ENCODE measurements at regions of chr6 and their contacts with region 1.

Region 1: DNA sequence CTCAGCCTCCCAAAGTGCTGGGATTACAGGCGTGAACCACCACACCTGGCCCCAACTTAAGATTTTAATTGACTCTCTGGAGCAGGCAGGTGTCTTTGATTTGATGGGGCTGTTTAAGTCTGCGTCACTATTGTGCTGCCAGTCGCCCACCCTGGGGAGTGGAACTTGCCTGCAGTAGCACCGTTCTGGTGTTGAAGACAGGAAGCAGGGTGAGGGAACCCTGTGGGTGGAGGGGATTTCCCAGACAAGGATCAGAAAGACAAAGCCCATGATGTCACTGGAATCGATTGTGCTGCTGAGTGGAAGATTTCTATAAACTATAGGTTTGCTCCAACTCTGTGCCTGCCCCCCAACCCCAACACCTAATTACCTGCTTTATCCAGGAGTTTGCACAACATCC is 11.0 kb downstream of the ALDH8A1 start:
- DNase-seq: peak in 28 of 35 experiments; percentile 13 to 71 (median 40)
- ATAC-seq: peak in 2 of 4 experiments; percentile 41 to 99
- H3K4me3 ChIP-seq: no peak overlapping the region
- H3K4me3 Mint-ChIP-seq: no peak overlapping the region
- H3K27ac ChIP-seq: no peak overlapping the region
- H3K27ac Mint-ChIP-seq: no peak overlapping the region
- H3K4me1 ChIP-seq: peaks cover 6% of the 10 kb centered on the region in 2 experiments
- H3K4me1 Mint-ChIP-seq: peaks cover 5 to 10% (median 9%) of the 10 kb centered on the region in 3 donors
- H3K27me3 ChIP-seq: no peaks in the 10 kb centered on the region
- H3K27me3 Mint-ChIP-seq: no peaks in the 10 kb centered on the region

Region 2: GRCh38 chr6:134123666-134124208 is 815.2 kb before region 1 on chr6:
- CTCF ChIA-PET with region 1: interaction called, 30 to 50 read pairs
- POLR2A ChIA-PET with region 1: no interaction called
- DNase-seq: peak in 25 of 35 experiments; percentile 2 to 72 (median 32)
- ATAC-seq: peak; percentile 59 to 98 (median 88)
- H3K4me3 ChIP-seq: no peak overlapping the region
- H3K4me3 Mint-ChIP-seq: no peak overlapping the region
- H3K27ac ChIP-seq: no peak overlapping the region
- H3K27ac Mint-ChIP-seq: peak overlapping the region in 1 of 2 donors; percentile 66
- H3K4me1 ChIP-seq: no peaks in the 10 kb centered on the region
- H3K4me1 Mint-ChIP-seq: peaks cover 0 to 3% (median 3%) of the 10 kb centered on the region in 3 donors
- H3K27me3 ChIP-seq: peaks cover 0 to 4% of the 10 kb centered on the region in 2 experiments
- H3K27me3 Mint-ChIP-seq: peaks cover 0 to 3% of the 10 kb centered on the region in 2 donors

Region 3: DNA sequence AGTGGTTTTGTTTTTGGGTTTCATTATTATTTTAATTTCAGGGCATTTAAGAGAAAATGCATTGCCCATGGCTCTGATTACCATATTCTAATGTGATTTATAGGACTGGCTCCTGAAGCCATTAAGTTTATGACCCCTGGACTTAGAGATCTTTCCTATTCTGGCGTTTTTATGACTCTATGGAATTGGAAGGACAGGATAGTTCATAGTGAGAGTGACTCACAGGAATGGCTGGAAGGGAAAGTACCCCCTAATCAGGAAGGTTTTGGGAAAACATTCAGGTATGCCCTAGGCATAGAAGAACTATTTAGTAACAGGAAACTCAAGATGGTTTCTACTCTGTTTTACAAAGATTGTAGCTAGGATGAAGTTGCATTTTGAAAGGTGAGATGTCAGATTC is 777.9 kb before region 1 on chr6:
- CTCF ChIA-PET with region 1: interaction called, 39 to 43 read pairs
- POLR2A ChIA-PET with region 1: interaction called in 1 of 2 experiments, 3 read pairs
- DNase-seq: no peak
- ATAC-seq: no peak
- H3K4me3 ChIP-seq: no peak overlapping the region
- H3K4me3 Mint-ChIP-seq: no peak overlapping the region
- H3K27ac ChIP-seq: no peak overlapping the region
- H3K27ac Mint-ChIP-seq: no peak overlapping the region
- H3K4me1 ChIP-seq: no peaks in the 10 kb centered on the region
- H3K4me1 Mint-ChIP-seq: no peaks in the 10 kb centered on the region
- H3K27me3 ChIP-seq: no peaks in the 10 kb centered on the region
- H3K27me3 Mint-ChIP-seq: no peaks in the 10 kb centered on the region

Region 4: GRCh38 chr6:134640975-134641429 is 297.9 kb before region 1 on chr6:
- CTCF ChIA-PET with region 1: interaction called, 3 to 13 read pairs
- POLR2A ChIA-PET with region 1: no interaction called
- DNase-seq: peak; percentile 46 to 89 (median 69)
- ATAC-seq: peak; percentile 86 to 90 (median 89)
- H3K4me3 ChIP-seq: no peak overlapping the region
- H3K4me3 Mint-ChIP-seq: no peak overlapping the region
- H3K27ac ChIP-seq: no peak overlapping the region
- H3K27ac Mint-ChIP-seq: no peak overlapping the region
- H3K4me1 ChIP-seq: peaks cover 0 to 8% of the 10 kb centered on the region in 2 experiments
- H3K4me1 Mint-ChIP-seq: peaks cover 18 to 20% (median 18%) of the 10 kb centered on the region in 3 donors
- H3K27me3 ChIP-seq: no peaks in the 10 kb centered on the region
- H3K27me3 Mint-ChIP-seq: no peaks in the 10 kb centered on the region